Caco-2 (cell line): ENCODE measurements at regions of chr2 and their contacts with region 1.

Region 1: DNA sequence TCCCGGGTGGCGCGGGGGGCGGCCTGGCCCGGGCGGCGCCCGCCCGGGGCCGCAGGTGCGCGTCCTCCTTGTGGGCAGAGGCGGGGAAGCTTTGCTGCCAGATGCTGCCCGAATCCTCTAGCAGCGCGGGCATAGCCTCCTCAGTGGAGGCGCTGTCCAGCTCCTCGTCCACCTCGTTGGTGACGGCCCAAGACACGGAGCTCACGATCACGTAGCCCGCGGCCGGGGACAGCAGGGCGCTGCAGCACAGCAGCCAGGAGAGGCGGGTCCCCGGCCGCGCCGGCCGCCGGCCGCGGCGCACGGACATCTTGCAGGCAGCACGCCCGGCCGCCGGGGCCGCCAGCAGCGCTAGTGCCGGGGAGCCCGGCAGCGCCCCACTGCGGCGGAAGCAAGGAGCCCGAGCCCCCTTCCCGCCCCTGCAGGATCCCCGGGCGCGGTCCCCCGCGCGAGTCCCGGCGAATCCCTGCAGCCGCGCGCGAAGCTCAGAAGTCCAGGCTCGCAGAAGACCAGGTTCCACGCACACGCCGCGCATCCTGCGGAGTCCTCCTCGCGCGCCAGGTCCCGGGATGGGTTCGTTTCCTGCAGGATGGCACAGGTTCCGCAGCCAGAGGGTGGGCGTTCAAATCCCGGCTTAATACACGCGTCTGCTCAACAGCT is at the start of gene CREG2:
- DNase-seq: peak; percentile 81 to 92
- H3K4me3 ChIP-seq: peak within 1 kb of the TSS; percentile 90
- H3K4me3 Mint-ChIP-seq: peak within 1 kb of the TSS; percentile 85
- H3K27ac Mint-ChIP-seq: peak within 1 kb of the TSS; percentile 45
- H3K4me1 ChIP-seq: peaks cover 13% of the 10 kb centered on the region
- H3K4me1 Mint-ChIP-seq: peaks cover 12% of the 10 kb centered on the region
- H3K27me3 ChIP-seq: no peaks in the 10 kb centered on the region
- H3K27me3 Mint-ChIP-seq: no peaks in the 10 kb centered on the region
- CTCF ChIP-seq: peak; percentile 70 to 73
- total RNA-seq, gene CREG2: 119 and 120 TPM in 2 replicates

Region 2: GRCh38 chr2:101205521-101205998 is 181.7 kb before region 1 on chr2:
- CTCF ChIA-PET with region 1: no interaction called
- POLR2A ChIA-PET with region 1: no interaction called
- intact Hi-C with region 1: no loop called
- DNase-seq: peak; percentile 68
- H3K4me3 ChIP-seq: no peak overlapping the region
- H3K4me3 Mint-ChIP-seq: no peak overlapping the region
- H3K27ac Mint-ChIP-seq: no peak overlapping the region
- H3K4me1 ChIP-seq: peaks cover 25% of the 10 kb centered on the region
- H3K4me1 Mint-ChIP-seq: peaks cover 17% of the 10 kb centered on the region
- H3K27me3 ChIP-seq: no peaks in the 10 kb centered on the region
- H3K27me3 Mint-ChIP-seq: no peaks in the 10 kb centered on the region
- CTCF ChIP-seq: peak; percentile 35 to 71

Region 3: DNA sequence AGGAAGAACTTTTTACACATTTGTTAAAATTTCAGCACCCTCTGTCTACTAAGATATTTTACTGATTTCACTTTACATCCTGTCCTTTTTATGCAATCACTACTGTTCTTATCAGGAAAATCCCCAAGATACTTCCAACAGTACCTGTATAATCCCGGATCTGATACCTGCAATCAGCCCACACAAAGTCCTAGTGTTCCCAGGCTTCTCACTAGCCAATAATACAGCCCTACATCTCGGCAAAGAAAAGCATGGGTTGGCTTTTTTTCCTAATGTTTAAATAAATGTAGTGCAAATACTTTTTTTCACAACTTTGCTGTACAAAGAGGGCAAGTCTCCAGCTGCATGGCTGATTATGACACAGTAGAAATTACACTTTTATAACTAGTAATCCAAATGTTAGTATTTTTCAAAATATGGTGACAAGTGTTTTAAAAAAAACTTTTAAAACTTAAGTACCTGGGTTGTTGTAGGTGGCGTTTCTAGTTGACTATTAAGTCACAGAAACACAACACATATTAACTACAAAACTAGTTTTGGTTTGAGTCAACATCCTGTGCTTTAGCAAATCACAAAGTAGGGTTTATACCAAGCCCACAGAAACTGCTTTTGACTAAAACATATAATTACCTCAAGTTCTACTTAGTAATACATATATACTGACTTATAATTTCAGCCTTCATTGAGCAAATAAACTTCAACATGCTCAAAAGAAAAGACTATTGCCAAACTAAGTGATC is 115.1 kb before region 1 on chr2:
- CTCF ChIA-PET with region 1: interaction called, 4 read pairs
- POLR2A ChIA-PET with region 1: no interaction called
- intact Hi-C with region 1: loop called (anchors 10 kb)
- DNase-seq: no peak
- H3K4me3 ChIP-seq: no peak overlapping the region
- H3K4me3 Mint-ChIP-seq: no peak overlapping the region
- H3K27ac Mint-ChIP-seq: no peak overlapping the region
- H3K4me1 ChIP-seq: peaks cover 47% of the 10 kb centered on the region
- H3K4me1 Mint-ChIP-seq: peaks cover 35% of the 10 kb centered on the region
- H3K27me3 ChIP-seq: no peaks in the 10 kb centered on the region
- H3K27me3 Mint-ChIP-seq: no peaks in the 10 kb centered on the region
- CTCF ChIP-seq: no peak

Region 4: GRCh38 chr2:101349893-101350662 is 37.2 kb before region 1 on chr2:
- CTCF ChIA-PET with region 1: interaction called, 46 read pairs
- POLR2A ChIA-PET with region 1: interaction called, 10 read pairs
- intact Hi-C with region 1: no loop called
- DNase-seq: no peak
- H3K4me3 ChIP-seq: no peak overlapping the region
- H3K4me3 Mint-ChIP-seq: no peak overlapping the region
- H3K27ac Mint-ChIP-seq: peak overlapping the region; percentile 80
- H3K4me1 ChIP-seq: peaks cover 44% of the 10 kb centered on the region
- H3K4me1 Mint-ChIP-seq: peaks cover 38% of the 10 kb centered on the region
- H3K27me3 ChIP-seq: no peaks in the 10 kb centered on the region
- H3K27me3 Mint-ChIP-seq: no peaks in the 10 kb centered on the region
- CTCF ChIP-seq: peak; percentile 32 to 53

Region 5: DNA sequence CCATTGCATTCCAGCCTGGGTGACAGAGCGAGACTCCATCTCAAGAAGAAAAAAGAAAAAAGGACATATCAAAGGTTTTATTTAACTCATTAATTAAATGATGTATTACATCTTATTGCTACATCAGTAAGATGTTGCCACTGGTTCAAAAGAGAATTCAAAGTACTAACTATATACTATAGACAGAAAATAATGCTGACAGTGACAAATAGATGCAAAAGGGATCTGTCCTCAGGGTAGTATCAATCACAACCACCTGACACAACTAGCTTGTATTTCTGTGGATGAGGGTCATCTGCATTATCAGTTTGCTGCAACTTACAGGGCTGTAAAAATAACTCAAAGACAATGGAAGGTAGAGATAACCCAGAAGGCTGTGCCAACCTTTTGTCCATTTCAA is 16.5 kb after region 1 on chr2:
- CTCF ChIA-PET with region 1: interaction called, 10 read pairs
- POLR2A ChIA-PET with region 1: no interaction called
- intact Hi-C with region 1: no loop called
- DNase-seq: peak in 1 of 2 experiments; percentile 61
- H3K4me3 ChIP-seq: no peak overlapping the region
- H3K4me3 Mint-ChIP-seq: no peak overlapping the region
- H3K27ac Mint-ChIP-seq: peak overlapping the region; percentile 72
- H3K4me1 ChIP-seq: peaks cover 33% of the 10 kb centered on the region
- H3K4me1 Mint-ChIP-seq: peaks cover 37% of the 10 kb centered on the region
- H3K27me3 ChIP-seq: no peaks in the 10 kb centered on the region
- H3K27me3 Mint-ChIP-seq: no peaks in the 10 kb centered on the region
- CTCF ChIP-seq: no peak